B cell (primary cell): ENCODE measurements at regions of chr2 and their contacts with region 1.

Region 1: GRCh38 chr2:42281416-42282081 is 79.5 kb downstream of the COX7A2L start:
- DNase-seq: no peak
- ATAC-seq: no peak
- H3K4me3 ChIP-seq: no peak overlapping the region
- H3K4me3 Mint-ChIP-seq: no peak overlapping the region
- H3K27ac ChIP-seq: no peak overlapping the region
- H3K27ac Mint-ChIP-seq: no peak overlapping the region
- H3K4me1 ChIP-seq: no peaks in the 10 kb centered on the region
- H3K4me1 Mint-ChIP-seq: no peaks in the 10 kb centered on the region
- H3K27me3 ChIP-seq: no peaks in the 10 kb centered on the region
- H3K27me3 Mint-ChIP-seq: no peaks in the 10 kb centered on the region
- CTCF ChIP-seq: no peak

Region 2: DNA sequence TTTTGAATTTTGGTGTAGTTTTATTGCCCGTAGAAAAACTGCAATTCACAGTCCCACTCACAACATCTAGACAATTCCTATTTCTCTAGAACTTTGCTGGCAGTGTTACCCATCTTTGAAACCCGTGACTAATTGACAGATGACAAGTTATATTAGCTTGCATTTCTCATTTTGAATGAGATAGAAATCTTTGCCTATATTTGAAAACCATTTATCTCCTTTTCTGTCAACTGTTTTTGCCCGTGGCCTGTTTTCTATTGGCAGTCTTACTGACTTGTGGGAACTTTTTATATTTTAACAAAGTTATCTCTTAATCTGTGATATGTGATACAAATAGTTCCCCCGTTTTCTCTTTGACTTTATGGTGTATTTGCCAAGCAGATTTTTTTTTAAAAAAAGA is 432.4 kb after region 1 on chr2:
- CTCF ChIA-PET with region 1: no interaction called
- POLR2A ChIA-PET with region 1: no interaction called
- intact Hi-C with region 1: loop called (anchors 5 kb)
- DNase-seq: no peak
- ATAC-seq: no peak
- H3K4me3 ChIP-seq: no peak overlapping the region
- H3K4me3 Mint-ChIP-seq: no peak overlapping the region
- H3K27ac ChIP-seq: no peak overlapping the region
- H3K27ac Mint-ChIP-seq: no peak overlapping the region
- H3K4me1 ChIP-seq: no peaks in the 10 kb centered on the region
- H3K4me1 Mint-ChIP-seq: no peaks in the 10 kb centered on the region
- H3K27me3 ChIP-seq: no peaks in the 10 kb centered on the region
- H3K27me3 Mint-ChIP-seq: no peaks in the 10 kb centered on the region
- CTCF ChIP-seq: no peak